Right ventricle myocardium superior (tissue), 1 donor: ENCODE measurements at regions of chrX and their contacts with region 1.

Region 1: GRCh38 chrX:119791438-119792231 is at the start of gene RPL39:
- DNase-seq: peak; percentile 89
- ATAC-seq: peak; percentile 98
- total RNA-seq, gene RPL39: 1,035 TPM

Region 2: GRCh38 chrX:119398974-119399771 is 392.5 kb before region 1 on chrX and contains the start of gene SLC25A43:
- intact Hi-C with region 1: no loop called
- DNase-seq: peak; percentile 51
- ATAC-seq: peak; percentile 94
- total RNA-seq, gene SLC25A43: 2.1 TPM

Region 3: DNA sequence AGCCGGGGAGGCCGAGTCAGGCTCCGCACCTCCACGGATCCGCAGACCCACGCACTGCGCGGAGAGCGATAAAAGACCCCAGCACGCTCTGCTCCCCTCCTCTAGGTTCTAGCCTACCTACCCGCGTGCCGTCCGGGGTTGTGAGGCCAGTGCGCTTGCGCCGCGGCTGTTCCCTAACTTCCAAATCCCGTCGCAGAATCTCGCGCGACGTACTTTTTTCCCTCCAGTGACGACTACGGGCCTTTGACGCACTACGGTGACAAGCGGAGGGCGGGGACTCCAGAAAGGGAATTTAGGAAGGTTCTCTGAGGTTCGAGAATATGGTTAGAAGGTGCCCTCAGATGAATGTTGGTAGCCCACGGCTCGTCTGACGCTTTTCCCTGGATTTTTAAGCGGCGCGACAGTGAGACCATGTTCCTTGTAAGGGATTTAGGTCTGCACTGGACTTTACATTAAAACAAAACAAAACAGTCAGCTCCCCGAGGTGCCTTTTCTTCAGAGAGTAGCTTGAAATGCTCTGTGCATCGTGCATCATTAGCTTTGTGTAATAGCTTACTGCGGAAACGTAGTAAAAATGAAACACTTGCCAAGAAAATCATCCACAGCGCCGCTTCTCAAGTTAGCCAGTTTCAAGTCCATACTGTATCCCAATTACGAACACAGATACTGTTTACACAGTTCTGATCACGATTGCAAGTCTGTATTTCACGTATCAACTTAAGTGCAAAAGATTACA is 185.2 kb before region 1 on chrX and contains the start of gene NKRF:
- intact Hi-C with region 1: no loop called
- DNase-seq: peak; percentile 96
- ATAC-seq: peak; percentile 98
- total RNA-seq, gene NKRF: 4.6 TPM

Region 4: DNA sequence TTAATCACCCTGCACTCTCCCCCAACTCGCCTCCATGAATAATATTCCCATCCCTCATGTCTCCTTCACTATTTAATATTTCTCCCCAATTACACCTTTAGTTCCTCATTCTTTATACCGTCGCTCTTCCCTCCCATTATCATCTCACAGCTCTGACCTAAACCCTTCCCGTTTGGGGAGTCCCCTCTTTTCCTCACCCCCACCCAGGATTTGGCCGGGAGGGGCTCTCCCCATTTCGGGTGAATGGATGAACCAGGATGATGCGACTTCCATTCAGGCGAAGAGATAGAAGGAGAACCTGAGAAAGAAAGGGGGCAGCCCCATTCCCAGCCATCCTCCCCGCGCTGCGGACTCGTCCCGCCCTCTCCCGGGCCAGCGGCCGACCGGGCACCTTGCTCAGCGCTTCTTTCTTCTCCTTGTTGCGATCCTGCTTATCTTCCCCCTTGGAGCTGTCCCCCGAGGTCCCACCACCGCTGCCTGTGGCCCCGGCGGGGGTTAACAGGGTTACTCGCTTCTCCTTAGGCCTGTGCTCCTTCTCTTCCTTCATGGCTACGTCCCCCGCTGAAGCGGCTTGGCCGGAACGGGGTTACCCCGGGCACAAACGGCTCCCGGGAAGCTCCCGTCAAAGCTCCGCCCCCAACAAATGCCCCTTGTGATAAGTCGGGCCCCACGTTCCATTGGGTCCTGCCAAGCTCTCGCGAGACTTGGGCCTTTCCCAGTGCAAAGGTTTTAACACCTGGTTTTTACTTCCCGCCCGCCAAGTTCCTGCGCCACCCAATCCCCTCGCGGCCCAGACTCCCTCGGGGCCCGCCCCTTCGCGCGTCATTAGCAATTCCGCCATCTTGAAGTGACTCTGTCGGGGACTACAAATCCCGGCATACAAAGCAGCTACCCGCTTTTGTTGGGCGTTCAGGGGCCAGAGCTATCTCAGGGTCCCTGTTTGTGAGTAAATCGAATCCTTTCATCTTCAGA is 61.0 kb after region 1 on chrX and contains the start of gene UPF3B:
- intact Hi-C with region 1: loop called (anchors 10 kb)
- DNase-seq: peak; percentile 95
- ATAC-seq: peak; percentile 99
- total RNA-seq, gene UPF3B: 3.3 TPM